ENCODE measurements at regions of chr18 and their contacts with region 1.

Region 1: DNA sequence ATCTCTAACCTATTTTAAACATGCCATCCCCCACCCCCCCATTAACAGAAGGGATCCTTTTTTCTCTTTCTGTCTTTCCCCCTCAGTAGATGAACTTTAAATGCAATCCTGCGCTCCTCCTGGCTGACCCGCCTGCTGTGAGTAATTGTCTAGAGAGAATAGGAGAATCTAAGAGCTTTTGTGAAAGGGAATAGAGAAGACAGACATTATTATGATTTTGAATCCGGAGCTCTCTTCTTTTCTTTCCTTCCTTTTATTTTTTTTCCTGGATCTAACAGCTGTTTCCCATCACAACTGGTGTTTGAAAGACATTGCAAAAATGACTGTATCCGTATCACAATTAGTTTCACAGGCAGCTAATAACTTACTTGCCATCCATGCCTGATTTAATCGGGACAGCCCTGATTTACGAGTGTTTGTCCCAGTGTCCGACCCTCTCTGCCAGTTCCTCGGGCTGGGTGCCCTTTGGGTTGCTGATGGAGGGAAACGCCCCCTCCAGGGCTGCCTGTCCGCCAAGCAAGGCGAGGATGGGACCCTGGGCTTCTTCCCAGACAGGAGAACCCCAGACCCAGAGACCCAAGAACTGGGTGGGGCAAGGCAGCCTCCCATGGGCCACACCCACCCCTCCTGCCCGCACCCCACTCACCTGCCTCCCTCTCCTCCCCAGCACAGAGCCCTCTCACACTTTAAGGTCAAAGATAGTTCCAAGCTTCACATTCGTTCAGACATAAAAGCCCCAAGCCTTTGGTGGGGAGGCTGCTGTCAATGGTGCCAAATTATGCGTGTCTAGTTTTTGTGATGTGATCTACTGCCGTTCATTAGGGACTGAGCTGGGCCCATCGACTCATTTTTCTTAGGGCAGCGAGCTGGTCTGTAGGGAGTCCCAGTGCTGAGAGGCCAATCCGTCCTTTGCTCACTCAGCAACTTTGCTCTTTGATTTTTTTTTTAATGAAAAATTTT is 231.7 kb downstream of the ZNF516 start:
- DNase-seq: no peak
- H3K4me3 ChIP-seq: no peak overlapping the region
- H3K27ac ChIP-seq: no peak overlapping the region
- H3K4me1 ChIP-seq: no peaks in the 10 kb centered on the region
- H3K27me3 ChIP-seq: peaks cover 86% of the 10 kb centered on the region
- CTCF ChIP-seq: no peak

Region 2: DNA sequence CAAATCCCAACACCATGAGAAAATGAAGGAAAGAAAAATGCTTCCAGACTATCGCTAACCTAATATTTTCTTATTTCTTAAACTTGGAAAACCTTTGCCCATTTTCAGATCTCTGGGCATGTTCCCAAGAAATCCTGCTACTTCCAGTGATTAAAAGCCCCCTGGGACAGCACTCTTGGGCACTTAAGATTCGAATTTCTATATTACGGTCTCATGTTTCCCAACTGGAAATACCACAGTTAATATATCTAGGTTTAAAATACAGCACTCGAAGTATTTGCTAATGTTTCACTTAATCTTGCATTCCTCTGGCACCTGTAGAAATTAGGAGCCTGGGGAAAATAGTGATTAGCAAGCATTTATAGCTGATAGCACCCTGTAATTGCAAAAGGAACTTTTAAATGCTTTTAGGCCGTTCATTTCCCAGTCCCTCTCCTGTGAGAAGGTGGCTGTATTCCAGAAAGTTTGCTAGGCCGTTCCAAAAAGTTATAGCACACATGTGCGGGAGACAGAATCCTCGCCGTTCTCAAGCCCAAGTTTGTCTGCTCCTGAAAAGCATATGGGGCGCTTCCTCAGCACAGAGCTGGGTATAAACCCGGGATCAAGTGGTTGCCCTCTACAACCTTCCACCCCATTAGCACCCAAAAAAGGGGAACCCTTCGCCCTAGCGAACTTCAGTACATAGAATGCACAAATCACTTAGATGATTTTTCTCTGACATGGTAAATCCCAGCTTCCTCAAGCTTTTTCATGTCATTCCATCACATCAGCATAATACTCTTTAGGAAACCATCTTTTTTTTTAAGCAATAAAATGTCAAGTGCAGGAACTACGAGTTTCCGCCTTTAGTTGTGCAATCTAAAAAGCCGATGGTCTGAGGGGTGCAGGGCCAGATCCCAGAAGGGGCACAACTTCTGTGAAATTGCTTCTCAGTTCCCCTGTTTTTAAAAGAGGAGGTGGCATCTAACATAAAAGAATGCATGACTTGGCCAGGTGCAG is 1866.9 kb before region 1 on chr18:
- CTCF ChIA-PET with region 1: no interaction called
- POLR2A ChIA-PET with region 1: interaction called, 24 read pairs
- intact Hi-C with region 1: no loop called
- DNase-seq: no peak
- H3K4me3 ChIP-seq: no peak overlapping the region
- H3K27ac ChIP-seq: no peak overlapping the region
- H3K4me1 ChIP-seq: no peaks in the 10 kb centered on the region
- H3K27me3 ChIP-seq: peaks cover 99% of the 10 kb centered on the region
- CTCF ChIP-seq: no peak

Measured in PC-9 (cell line).